ENCODE measurements at regions of chr16 and their contacts with region 1.

Region 1: GRCh38 chr16:1971796-1972489 is at the start of gene TBL3:
- DNase-seq: peak; percentile 98
- H3K4me3 ChIP-seq: peak within 1 kb of the TSS; percentile 75 to 88
- H3K27ac ChIP-seq: peak within 1 kb of the TSS; percentile 93 to 98
- H3K4me1 ChIP-seq: peaks cover 0 to 9% of the 10 kb centered on the region in 2 experiments; a peak in 1 of 4 replicates
- H3K27me3 ChIP-seq: no peaks in the 10 kb centered on the region
- CTCF ChIP-seq: no peak
- EP300 ChIP-seq: no peak
- RAD21 ChIP-seq: no peak
- polyA plus RNA-seq, gene TBL3: 36.7 and 37.1 TPM in 2 replicates

Region 2: GRCh38 chr16:1929578-1930337 is 42.2 kb before region 1 on chr16:
- CTCF ChIA-PET with region 1: no interaction called
- POLR2A ChIA-PET with region 1: no interaction called
- DNase-seq: peak; percentile 99
- H3K4me3 ChIP-seq: peak overlapping the region; percentile 56 to 64
- H3K27ac ChIP-seq: peak overlapping the region in 1 of 2 experiments; percentile 77; a peak in 3 of 4 replicates
- H3K4me1 ChIP-seq: peaks cover 0 to 17% of the 10 kb centered on the region in 2 experiments; a peak in 1 of 4 replicates
- H3K27me3 ChIP-seq: no peaks in the 10 kb centered on the region
- CTCF ChIP-seq: peak; percentile 73
- EP300 ChIP-seq: no peak
- RAD21 ChIP-seq: peak; percentile 91

Region 3: GRCh38 chr16:1983544-1984346 is 11.8 kb after region 1 on chr16 and contains the start of gene GFER:
- CTCF ChIA-PET with region 1: interaction called, 19 read pairs
- POLR2A ChIA-PET with region 1: interaction called, 8 read pairs
- DNase-seq: peak; percentile 99
- H3K4me3 ChIP-seq: peak within 1 kb of the TSS; percentile 77 to 80
- H3K27ac ChIP-seq: peak within 1 kb of the TSS; percentile 66 to 95
- H3K4me1 ChIP-seq: peaks cover 8 to 21% of the 10 kb centered on the region in 2 experiments; a peak in 2 of 4 replicates
- H3K27me3 ChIP-seq: no peaks in the 10 kb centered on the region
- CTCF ChIP-seq: peak; percentile 50
- EP300 ChIP-seq: no peak
- RAD21 ChIP-seq: no peak
- polyA plus RNA-seq, gene GFER: 13.3 and 20.4 TPM in 2 replicates

Region 4: DNA sequence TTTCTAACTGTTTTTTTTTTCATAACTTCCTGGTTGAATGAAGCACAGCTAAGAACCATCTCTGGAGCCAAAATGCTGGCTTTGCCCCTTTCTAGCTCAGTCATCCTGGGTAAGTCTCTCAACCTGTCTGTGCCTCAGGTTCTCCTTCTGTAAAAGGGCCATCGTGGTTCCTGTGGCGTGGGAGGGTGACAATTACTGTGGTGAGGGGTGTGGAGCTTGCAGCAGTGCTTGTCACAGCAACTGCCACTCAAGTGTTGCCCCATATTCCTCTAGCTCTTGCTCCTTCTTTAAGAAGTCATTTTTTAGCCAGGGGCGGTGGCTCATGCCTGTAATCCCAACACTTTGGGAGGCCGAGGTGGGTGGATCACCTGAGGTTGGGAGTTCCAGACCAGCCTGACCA is 24.2 kb after region 1 on chr16:
- CTCF ChIA-PET with region 1: no interaction called
- POLR2A ChIA-PET with region 1: no interaction called
- DNase-seq: no peak
- H3K4me3 ChIP-seq: no peak overlapping the region
- H3K27ac ChIP-seq: no peak overlapping the region
- H3K4me1 ChIP-seq: peaks cover 0 to under 1% of the 10 kb centered on the region in 2 experiments; a peak in 1 of 4 replicates
- H3K27me3 ChIP-seq: no peaks in the 10 kb centered on the region
- CTCF ChIP-seq: no peak
- EP300 ChIP-seq: no peak
- RAD21 ChIP-seq: no peak

Region 5: GRCh38 chr16:2056077-2056476 is 84.1 kb after region 1 on chr16:
- CTCF ChIA-PET with region 1: no interaction called
- POLR2A ChIA-PET with region 1: no interaction called
- DNase-seq: no peak
- H3K4me3 ChIP-seq: no peak overlapping the region
- H3K27ac ChIP-seq: no peak overlapping the region
- H3K4me1 ChIP-seq: no peaks in the 10 kb centered on the region
- H3K27me3 ChIP-seq: no peaks in the 10 kb centered on the region
- CTCF ChIP-seq: peak; percentile 25; the same call in 1 of the 2 replicates
- EP300 ChIP-seq: no peak
- RAD21 ChIP-seq: no peak